ENCODE measurements at regions of chr5 and their contacts with region 1.

Region 1: DNA sequence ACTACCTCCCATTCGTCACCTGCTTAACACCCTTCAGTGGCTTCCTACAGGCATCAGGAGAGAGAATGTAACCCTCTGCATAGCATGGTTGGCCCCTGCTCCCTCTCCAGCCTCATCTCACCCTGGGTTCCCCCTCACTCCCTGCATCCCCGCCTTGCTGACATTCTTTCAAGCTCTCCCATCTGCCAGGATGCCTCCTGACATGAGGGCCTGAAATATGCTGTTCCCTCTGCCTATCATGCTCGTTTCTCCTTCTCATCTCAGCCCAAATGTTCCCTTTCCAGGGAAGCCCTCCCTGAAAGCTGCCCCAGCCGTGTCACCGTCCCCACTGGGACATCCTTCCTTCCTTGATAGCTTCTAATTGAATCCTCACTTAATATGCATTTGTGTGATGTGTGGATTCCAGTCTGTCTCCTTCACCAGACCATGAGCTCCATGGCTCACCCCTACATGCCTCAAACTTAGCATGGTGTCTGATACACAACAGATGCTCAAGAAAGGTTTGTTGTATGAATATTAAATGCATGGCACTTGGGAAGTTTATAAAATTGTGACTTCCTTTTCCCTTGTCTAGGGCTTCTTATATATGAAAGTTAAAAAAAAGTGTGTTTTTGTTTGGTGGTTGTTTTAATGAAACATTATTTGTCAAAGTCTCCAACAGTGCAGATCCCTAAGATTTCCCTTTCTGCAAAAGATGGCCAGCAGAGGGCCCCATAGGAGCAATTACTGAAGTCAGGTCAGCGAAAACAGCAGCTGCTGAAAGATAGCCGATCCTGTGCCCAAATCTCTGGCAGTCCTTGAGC is 7.3 kb upstream of the C5orf58 start:
- DNase-seq: peak; percentile 80
- ATAC-seq: peak; percentile 77 to 81

Region 2: GRCh38 chr5:169970911-169971765 is 254.4 kb before region 1 on chr5:
- intact Hi-C with region 1: no loop called
- DNase-seq: peak; percentile 50
- ATAC-seq: peak in 1 of 2 donors; percentile 71

Region 3: DNA sequence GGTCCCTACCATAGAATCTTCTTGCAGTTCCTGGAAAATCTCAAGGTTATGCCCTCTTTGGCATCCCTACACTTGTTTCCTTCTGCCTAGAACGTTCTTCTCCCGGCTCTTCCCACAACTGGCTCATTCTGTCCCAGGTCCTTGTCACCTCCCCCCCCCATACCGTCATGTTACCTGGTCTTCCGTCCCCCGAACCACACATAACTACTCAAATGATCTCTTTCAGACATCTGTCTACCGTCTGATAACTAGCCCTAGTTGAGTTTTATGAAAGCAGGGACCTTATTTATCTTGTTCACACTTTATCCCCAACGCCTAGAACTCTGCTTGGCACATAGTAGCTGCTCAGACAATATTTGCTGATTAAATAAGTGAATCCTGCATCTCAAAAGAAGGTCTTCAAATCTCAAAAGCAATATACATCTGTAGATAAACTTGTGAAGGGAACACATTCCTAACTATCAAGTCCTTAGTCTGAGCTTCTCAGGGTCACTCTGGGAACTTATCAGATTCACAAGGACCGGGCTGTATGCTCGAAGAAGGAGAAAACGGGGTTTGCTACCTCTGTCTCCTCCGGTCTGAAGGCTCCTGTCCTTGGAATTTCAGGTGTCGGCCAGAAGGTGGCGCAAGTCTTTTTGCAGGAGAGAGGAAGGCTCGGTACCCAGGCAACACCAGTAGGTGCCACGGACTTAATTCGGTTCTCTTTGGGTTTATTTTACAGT is 42.1 kb after region 1 on chr5:
- intact Hi-C with region 1: loop called in 1 of 2 experiments (anchors 5 kb)
- DNase-seq: peak; percentile 78
- ATAC-seq: peak; percentile 71 to 77

Region 4: DNA sequence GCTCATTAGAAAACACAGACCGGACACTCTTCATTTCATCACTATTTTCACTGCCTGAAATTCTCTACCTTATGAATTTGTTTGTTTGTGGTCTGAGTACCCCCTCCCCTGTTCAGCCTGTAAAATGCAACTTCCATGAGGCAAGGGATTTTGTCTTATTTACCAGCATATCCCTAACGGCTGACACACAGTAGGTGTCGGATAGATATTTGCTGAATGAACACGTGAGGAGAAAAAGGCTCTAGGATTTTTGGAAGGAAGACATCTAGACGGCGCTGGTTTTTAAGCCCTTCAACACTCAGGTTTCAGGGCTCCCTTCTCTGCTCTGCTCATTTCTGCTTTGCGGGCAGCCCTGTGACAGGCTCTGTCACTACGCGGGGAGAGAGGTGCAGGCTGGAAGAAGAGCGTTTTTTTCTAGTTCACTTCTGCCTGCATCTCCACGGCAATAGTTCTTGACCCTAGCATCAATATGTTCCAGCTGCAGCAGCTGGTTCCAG is 122.7 kb after region 1 on chr5:
- intact Hi-C with region 1: loop called in 1 of 2 experiments (anchors 2 kb)
- DNase-seq: no peak
- ATAC-seq: peak; percentile 32 to 53

Region 5: GRCh38 chr5:170420780-170421412 is 195.4 kb after region 1 on chr5:
- intact Hi-C with region 1: loop called (anchors 2 to 5 kb)
- DNase-seq: peak; percentile 65
- ATAC-seq: peak; percentile 76 to 77

Region 6: DNA sequence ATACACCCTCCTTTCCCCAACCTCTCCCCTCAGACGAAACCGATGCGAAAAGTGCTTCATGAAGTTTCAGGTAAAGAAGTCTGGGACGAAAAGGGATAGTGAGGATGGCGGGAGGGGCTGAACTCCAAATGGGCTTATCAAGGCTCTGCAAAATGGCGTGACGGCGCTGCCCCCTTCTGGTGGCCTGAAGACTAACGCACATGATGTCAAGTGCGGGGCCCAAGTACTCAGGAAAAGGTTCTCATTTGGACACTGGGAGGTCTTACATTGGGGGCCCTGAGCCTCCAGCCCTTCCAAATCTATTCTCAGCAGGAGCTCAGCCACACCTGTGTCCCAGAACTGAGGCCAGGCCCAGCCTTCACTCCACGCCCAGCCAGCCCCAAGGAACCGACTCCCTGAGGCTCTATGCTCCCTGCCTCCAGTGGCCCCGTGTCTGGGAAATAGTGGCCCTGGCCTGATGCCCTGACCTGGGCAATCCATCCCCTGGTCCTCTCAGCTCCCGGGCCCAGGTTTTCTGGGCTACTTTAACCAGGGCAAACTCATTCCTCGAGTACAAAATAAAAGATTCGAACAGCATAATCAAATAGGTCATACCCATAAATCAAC is 398.2 kb after region 1 on chr5:
- intact Hi-C with region 1: loop called in 1 of 2 experiments (anchors 10 kb)
- DNase-seq: peak; percentile 38
- ATAC-seq: peak; percentile 63

Region 7: GRCh38 chr5:170638454-170639220 is 413.1 kb after region 1 on chr5:
- intact Hi-C with region 1: no loop called
- DNase-seq: peak; percentile 68
- ATAC-seq: peak; percentile 59 to 65

Measured in left cardiac atrium (tissue), 4 donors.